Motor neuron (in vitro differentiated cells): ENCODE measurements at regions of chr17 and their contacts with region 1.

Region 1: DNA sequence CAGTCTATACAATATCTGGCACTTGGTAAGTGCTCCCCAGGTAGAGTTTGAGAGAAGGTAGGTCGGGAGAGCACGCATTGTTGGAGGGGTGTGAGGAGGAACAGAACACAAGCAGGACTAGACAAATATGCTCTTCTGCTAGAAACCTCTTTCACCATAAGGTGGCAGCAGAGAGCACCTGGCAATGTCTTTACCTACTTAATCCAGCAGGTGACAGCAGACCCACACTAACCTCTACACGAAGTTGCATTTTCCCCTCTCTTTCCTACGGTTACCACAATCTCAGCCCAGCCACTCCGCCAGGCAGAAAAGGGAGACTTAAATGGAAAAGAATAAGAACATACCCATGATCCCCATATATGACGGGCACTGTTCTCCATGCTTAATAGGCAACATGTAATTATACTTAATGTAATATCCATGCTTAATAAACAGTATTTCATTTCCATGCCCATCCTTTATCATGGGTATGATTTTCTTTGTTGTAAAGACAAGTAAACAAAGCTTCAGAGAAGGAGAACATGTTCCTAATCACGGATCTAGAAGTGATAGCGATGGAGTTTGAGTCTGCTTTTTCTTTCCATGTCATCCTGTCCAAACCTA is 55.1 kb upstream of the CCL2 start:
- ATAC-seq: peak; percentile 77 to 97 (median 87)
- H3K4me3 ChIP-seq: no peak overlapping the region
- H3K27ac ChIP-seq: no peak overlapping the region
- H3K4me1 ChIP-seq: no peaks in the 10 kb centered on the region

Region 2: GRCh38 chr17:33968350-33969044 is 231.5 kb before region 1 on chr17:
- in situ Hi-C with region 1: no loop called
- ATAC-seq: no peak
- H3K4me3 ChIP-seq: no peak overlapping the region
- H3K27ac ChIP-seq: no peak overlapping the region
- H3K4me1 ChIP-seq: peaks cover 0 to 7% of the 10 kb centered on the region in 2 donors

Region 3: GRCh38 chr17:34306466-34306865 is 106.4 kb after region 1 on chr17:
- in situ Hi-C with region 1: loop called in 1 of 9 experiments (anchors 5 kb)
- ATAC-seq: peak in 4 of 8 experiments; percentile 35 to 98 (median 90)
- H3K4me3 ChIP-seq: no peak overlapping the region
- H3K27ac ChIP-seq: no peak overlapping the region
- H3K4me1 ChIP-seq: no peaks in the 10 kb centered on the region

Region 4: GRCh38 chr17:34361478-34362061 is 161.5 kb after region 1 on chr17:
- in situ Hi-C with region 1: loop called in 7 of 9 experiments (anchors 5 to 25 kb)
- ATAC-seq: peak; percentile 89 to 99 (median 98)
- H3K4me3 ChIP-seq: no peak overlapping the region
- H3K27ac ChIP-seq: no peak overlapping the region
- H3K4me1 ChIP-seq: no peaks in the 10 kb centered on the region